Caco-2 (cell line): ENCODE measurements at regions of chr1 and their contacts with region 1.

Region 1: GRCh38 chr1:193059268-193060225 is at the starts of genes RO60 and UCHL5:
- DNase-seq: peak; percentile 96 to 98
- H3K4me3 ChIP-seq: peak within 1 kb of the TSS; percentile 70
- H3K4me3 Mint-ChIP-seq: peak within 1 kb of the TSS; percentile 90
- H3K27ac Mint-ChIP-seq: peak within 1 kb of the TSS; percentile 91
- H3K4me1 ChIP-seq: peaks cover 5% of the 10 kb centered on the region; the same call in 1 of the 2 replicates
- H3K4me1 Mint-ChIP-seq: peaks cover 15% of the 10 kb centered on the region
- H3K27me3 ChIP-seq: no peaks in the 10 kb centered on the region
- H3K27me3 Mint-ChIP-seq: no peaks in the 10 kb centered on the region
- CTCF ChIP-seq: peak in 1 of 2 experiments; percentile 21
- total RNA-seq, gene RO60: 49.2 and 50.0 TPM in 2 replicates
- total RNA-seq, gene UCHL5: 49.6 and 49.9 TPM in 2 replicates

Region 2: GRCh38 chr1:192682335-192682734 is 377.2 kb before region 1 on chr1:
- CTCF ChIA-PET with region 1: no interaction called
- POLR2A ChIA-PET with region 1: no interaction called
- intact Hi-C with region 1: no loop called
- DNase-seq: no peak
- H3K4me3 ChIP-seq: no peak overlapping the region
- H3K4me3 Mint-ChIP-seq: no peak overlapping the region
- H3K27ac Mint-ChIP-seq: no peak overlapping the region
- H3K4me1 ChIP-seq: no peaks in the 10 kb centered on the region
- H3K4me1 Mint-ChIP-seq: no peaks in the 10 kb centered on the region
- H3K27me3 ChIP-seq: no peaks in the 10 kb centered on the region
- H3K27me3 Mint-ChIP-seq: no peaks in the 10 kb centered on the region
- CTCF ChIP-seq: no peak

Region 3: DNA sequence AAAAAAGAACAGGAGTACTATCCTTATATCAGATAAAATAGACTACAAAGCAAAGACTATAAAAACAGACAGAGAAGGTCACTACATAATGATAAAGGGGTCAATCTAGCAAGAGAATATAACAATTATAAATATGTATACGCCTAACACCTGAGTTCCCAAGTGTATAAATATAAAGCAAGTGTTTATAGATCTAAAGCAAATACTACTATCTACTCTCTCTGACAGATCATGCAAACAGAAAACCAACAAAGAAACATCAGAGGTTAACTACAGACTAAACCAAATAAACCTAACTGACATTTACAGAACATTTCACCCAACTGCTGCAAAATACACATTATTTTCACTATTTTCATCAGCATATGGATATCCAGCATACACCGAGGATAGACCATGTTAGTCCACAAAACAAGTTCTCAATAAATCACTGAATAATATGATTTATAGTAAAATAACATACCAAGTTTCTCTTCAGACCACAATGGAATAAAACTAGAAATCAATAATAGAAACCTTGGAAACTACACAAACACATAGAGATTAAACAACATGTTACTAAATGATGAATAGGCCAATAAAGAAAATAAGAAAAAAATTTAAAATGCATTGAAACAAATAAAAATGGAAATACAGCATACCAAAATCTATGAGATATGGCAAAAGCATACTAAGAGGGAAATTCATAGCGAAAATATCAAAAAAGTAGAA is 23.1 kb before region 1 on chr1:
- CTCF ChIA-PET with region 1: no interaction called
- POLR2A ChIA-PET with region 1: interaction called, 3 read pairs
- intact Hi-C with region 1: loop called (anchors 2 kb)
- DNase-seq: no peak
- H3K4me3 ChIP-seq: no peak overlapping the region
- H3K4me3 Mint-ChIP-seq: no peak overlapping the region
- H3K27ac Mint-ChIP-seq: no peak overlapping the region
- H3K4me1 ChIP-seq: peaks cover 6% of the 10 kb centered on the region
- H3K4me1 Mint-ChIP-seq: peaks cover 18% of the 10 kb centered on the region
- H3K27me3 ChIP-seq: no peaks in the 10 kb centered on the region
- H3K27me3 Mint-ChIP-seq: no peaks in the 10 kb centered on the region
- CTCF ChIP-seq: no peak

Region 4: GRCh38 chr1:193104906-193105820 is 45.6 kb after region 1 on chr1 and contains the start of gene GLRX2:
- CTCF ChIA-PET with region 1: no interaction called
- POLR2A ChIA-PET with region 1: interaction called, 15 read pairs
- intact Hi-C with region 1: loop called (anchors 1 kb)
- DNase-seq: peak; percentile 88 to 90
- H3K4me3 ChIP-seq: peak within 1 kb of the TSS; percentile 57
- H3K4me3 Mint-ChIP-seq: peak within 1 kb of the TSS; percentile 79
- H3K27ac Mint-ChIP-seq: peak within 1 kb of the TSS; percentile 75
- H3K4me1 ChIP-seq: peaks cover 8% of the 10 kb centered on the region; the same call in 1 of the 2 replicates
- H3K4me1 Mint-ChIP-seq: peaks cover 13% of the 10 kb centered on the region
- H3K27me3 ChIP-seq: no peaks in the 10 kb centered on the region
- H3K27me3 Mint-ChIP-seq: no peaks in the 10 kb centered on the region
- CTCF ChIP-seq: peak in 1 of 2 experiments; percentile 5
- total RNA-seq, gene GLRX2: 20.7 and 21.5 TPM in 2 replicates